Ovary (tissue), 10 donors: ENCODE measurements at regions of chr12 and their contacts with region 1.

Region 1: GRCh38 chr12:125882141-125882540 is 816.9 kb downstream of the AACS start:
- DNase-seq: no peak
- H3K4me3 ChIP-seq: no peak overlapping the region
- H3K27ac ChIP-seq: no peak overlapping the region
- H3K4me1 ChIP-seq: no peaks in the 10 kb centered on the region
- H3K27me3 ChIP-seq: no peaks in the 10 kb centered on the region
- CTCF ChIP-seq: no peak
- EP300 ChIP-seq: no peak
- POLR2A ChIP-seq: no peak

Region 2: DNA sequence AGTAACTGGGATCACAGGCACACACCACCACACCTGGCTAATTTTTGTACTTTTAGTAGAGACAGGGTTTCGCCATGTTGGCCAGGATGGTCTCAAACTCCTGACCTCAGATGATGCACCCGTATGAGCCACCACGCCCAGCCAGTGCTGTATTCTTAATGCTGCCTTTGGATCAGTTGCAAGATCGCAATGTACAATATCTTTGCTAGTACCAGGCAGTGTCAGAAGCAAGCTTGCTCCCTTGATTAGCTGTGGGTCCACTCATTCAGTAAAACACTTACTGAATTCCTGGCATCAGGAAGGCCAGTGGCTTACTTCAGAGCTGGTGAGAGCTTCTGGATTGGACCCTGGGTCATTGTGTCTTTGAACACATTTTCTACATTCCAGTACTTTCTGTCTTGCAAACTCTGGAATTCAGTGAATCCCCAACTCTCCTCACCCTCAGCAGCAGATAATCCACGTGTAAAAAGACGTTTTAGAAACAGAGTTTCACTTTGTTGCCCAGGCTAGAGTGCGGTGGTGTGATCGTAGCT is 366.8 kb after region 1 on chr12:
- intact Hi-C with region 1: loop called in 1 of 4 experiments (anchors 5 kb)
- DNase-seq: no peak
- H3K4me3 ChIP-seq: no peak overlapping the region
- H3K27ac ChIP-seq: no peak overlapping the region
- H3K4me1 ChIP-seq: no peaks in the 10 kb centered on the region
- H3K27me3 ChIP-seq: no peaks in the 10 kb centered on the region
- CTCF ChIP-seq: no peak
- EP300 ChIP-seq: no peak
- POLR2A ChIP-seq: no peak